B cell (primary cell): ENCODE measurements at regions of chr15 and their contacts with region 1.

Region 1: GRCh38 chr15:64162870-64163658 is at the start of gene PPIB:
- DNase-seq: peak; percentile 98
- ATAC-seq: peak; percentile 91
- H3K4me3 ChIP-seq: peak within 1 kb of the TSS; percentile 65 to 86 (median 85)
- H3K4me3 Mint-ChIP-seq: peak within 1 kb of the TSS; percentile 92
- H3K27ac ChIP-seq: peak within 1 kb of the TSS; percentile 72 to 87
- H3K27ac Mint-ChIP-seq: peak within 1 kb of the TSS; percentile 96
- H3K4me1 ChIP-seq: peaks cover 42 to 58% of the 10 kb centered on the region in 2 donors
- H3K4me1 Mint-ChIP-seq: peaks cover 52% of the 10 kb centered on the region
- H3K27me3 ChIP-seq: no peaks in the 10 kb centered on the region
- H3K27me3 Mint-ChIP-seq: no peaks in the 10 kb centered on the region
- CTCF ChIP-seq: peak; percentile 32
- total RNA-seq, gene PPIB: 107 and 108 TPM in 2 replicates

Region 2: DNA sequence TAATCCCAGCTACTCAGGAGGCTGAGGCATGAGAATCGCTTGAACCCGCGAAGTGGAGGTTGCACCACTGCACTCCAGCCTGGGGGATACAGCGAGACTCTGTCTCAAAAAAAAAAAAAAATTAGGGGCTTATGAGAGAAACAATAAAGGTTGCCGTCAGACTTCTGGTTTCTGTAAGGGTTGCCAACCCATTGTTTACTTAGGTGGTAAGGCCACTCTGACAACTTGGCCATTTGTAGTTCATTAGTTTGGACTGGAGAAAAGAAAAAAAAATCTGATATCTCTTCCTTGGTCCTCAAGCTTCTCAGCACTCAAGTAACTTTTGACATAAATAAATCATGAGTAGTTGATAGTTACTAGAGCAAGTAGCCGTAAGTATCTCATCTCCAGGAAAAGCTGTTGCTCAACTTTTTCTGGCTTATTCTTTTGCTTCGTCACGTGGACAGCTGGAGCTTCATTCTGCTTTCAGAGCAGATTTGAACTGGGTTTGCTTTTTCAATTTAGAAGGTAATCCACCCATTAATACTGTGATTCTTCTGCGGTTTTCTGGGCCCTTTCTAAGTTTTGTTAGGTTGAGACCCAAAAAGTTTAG is 57.9 kb before region 1 on chr15:
- CTCF ChIA-PET with region 1: no interaction called
- POLR2A ChIA-PET with region 1: no interaction called
- intact Hi-C with region 1: no loop called
- DNase-seq: no peak
- ATAC-seq: no peak
- H3K4me3 ChIP-seq: no peak overlapping the region
- H3K4me3 Mint-ChIP-seq: no peak overlapping the region
- H3K27ac ChIP-seq: no peak overlapping the region
- H3K27ac Mint-ChIP-seq: no peak overlapping the region
- H3K4me1 ChIP-seq: peaks cover 30 to 42% of the 10 kb centered on the region in 2 donors
- H3K4me1 Mint-ChIP-seq: peaks cover 54% of the 10 kb centered on the region
- H3K27me3 ChIP-seq: no peaks in the 10 kb centered on the region
- H3K27me3 Mint-ChIP-seq: no peaks in the 10 kb centered on the region
- CTCF ChIP-seq: no peak

Region 3: GRCh38 chr15:64144565-64145281 is 18.3 kb before region 1 on chr15:
- CTCF ChIA-PET with region 1: interaction called, 6 read pairs
- POLR2A ChIA-PET with region 1: interaction called, 11 read pairs
- intact Hi-C with region 1: no loop called
- DNase-seq: peak; percentile 48
- ATAC-seq: peak; percentile 78
- H3K4me3 ChIP-seq: no peak overlapping the region
- H3K4me3 Mint-ChIP-seq: peak overlapping the region; percentile 34
- H3K27ac ChIP-seq: peak overlapping the region; percentile 61 to 71
- H3K27ac Mint-ChIP-seq: peak overlapping the region; percentile 91
- H3K4me1 ChIP-seq: peaks cover 11 to 26% of the 10 kb centered on the region in 2 donors
- H3K4me1 Mint-ChIP-seq: peaks cover 27% of the 10 kb centered on the region
- H3K27me3 ChIP-seq: no peaks in the 10 kb centered on the region
- H3K27me3 Mint-ChIP-seq: no peaks in the 10 kb centered on the region
- CTCF ChIP-seq: no peak

Region 4: DNA sequence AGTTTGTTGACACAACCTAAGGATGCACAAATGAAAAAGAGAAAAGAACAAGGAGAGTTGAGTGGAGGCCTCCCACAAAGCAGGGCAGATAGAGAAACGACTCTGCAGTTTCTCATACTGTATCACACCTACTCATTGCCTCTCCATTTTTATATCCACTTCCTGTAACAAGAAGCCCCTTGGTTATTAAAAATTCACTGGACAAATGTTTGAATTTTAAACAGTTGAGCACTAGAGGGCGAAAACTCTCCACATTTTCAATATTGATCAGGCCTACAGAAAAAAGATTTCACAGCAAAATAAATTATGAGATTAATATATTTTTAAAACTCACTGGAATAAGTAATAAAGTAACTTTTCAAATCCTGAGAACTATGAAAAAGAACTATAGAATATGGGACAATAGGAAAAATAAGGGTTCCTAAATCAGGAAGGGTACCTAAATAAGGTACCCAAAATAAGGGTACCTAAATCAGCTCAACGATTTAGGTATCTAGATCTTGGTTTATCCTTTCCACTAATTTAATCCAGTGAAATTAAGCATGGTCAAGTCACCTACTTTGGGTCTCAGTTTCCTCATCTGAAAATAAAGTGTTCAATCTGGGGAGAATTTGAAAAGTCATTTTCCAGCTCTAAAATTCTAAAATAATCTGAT is 46.7 kb after region 1 on chr15:
- CTCF ChIA-PET with region 1: no interaction called
- POLR2A ChIA-PET with region 1: no interaction called
- intact Hi-C with region 1: loop called (anchors 1 kb)
- DNase-seq: peak; percentile 36
- ATAC-seq: no peak
- H3K4me3 ChIP-seq: no peak overlapping the region
- H3K4me3 Mint-ChIP-seq: no peak overlapping the region
- H3K27ac ChIP-seq: no peak overlapping the region
- H3K27ac Mint-ChIP-seq: no peak overlapping the region
- H3K4me1 ChIP-seq: no peaks in the 10 kb centered on the region
- H3K4me1 Mint-ChIP-seq: peaks cover 1% of the 10 kb centered on the region
- H3K27me3 ChIP-seq: no peaks in the 10 kb centered on the region
- H3K27me3 Mint-ChIP-seq: no peaks in the 10 kb centered on the region
- CTCF ChIP-seq: peak; percentile 60

Region 5: GRCh38 chr15:64387562-64388168 is 224.6 kb after region 1 on chr15 and contains the start of gene TRIP4:
- CTCF ChIA-PET with region 1: interaction called, 7 read pairs
- POLR2A ChIA-PET with region 1: interaction called, 5 read pairs
- intact Hi-C with region 1: loop called (anchors 1 kb)
- DNase-seq: peak; percentile 96
- ATAC-seq: peak; percentile 100
- H3K4me3 ChIP-seq: peak within 1 kb of the TSS; percentile 63 to 97 (median 82)
- H3K4me3 Mint-ChIP-seq: peak within 1 kb of the TSS; percentile 97
- H3K27ac ChIP-seq: peak within 1 kb of the TSS; percentile 58 to 70
- H3K27ac Mint-ChIP-seq: peak within 1 kb of the TSS; percentile 95
- H3K4me1 ChIP-seq: peaks cover 10 to 18% of the 10 kb centered on the region in 2 donors
- H3K4me1 Mint-ChIP-seq: peaks cover 15% of the 10 kb centered on the region
- H3K27me3 ChIP-seq: no peaks in the 10 kb centered on the region
- H3K27me3 Mint-ChIP-seq: no peaks in the 10 kb centered on the region
- CTCF ChIP-seq: no peak
- total RNA-seq, gene TRIP4: 35.7 and 38.2 TPM in 2 replicates

Region 6: GRCh38 chr15:65286704-65287519 is 1123.8 kb after region 1 on chr15 and contains the start of gene PARP16:
- CTCF ChIA-PET with region 1: no interaction called
- POLR2A ChIA-PET with region 1: interaction called, 3 read pairs
- intact Hi-C with region 1: loop called (anchors 5 kb)
- DNase-seq: peak; percentile 95
- ATAC-seq: peak; percentile 95
- H3K4me3 ChIP-seq: peak within 1 kb of the TSS; percentile 67 to 89 (median 84)
- H3K4me3 Mint-ChIP-seq: peak within 1 kb of the TSS; percentile 89
- H3K27ac ChIP-seq: peak within 1 kb of the TSS; percentile 83 to 91
- H3K27ac Mint-ChIP-seq: peak within 1 kb of the TSS; percentile 89
- H3K4me1 ChIP-seq: peaks cover 18 to 19% of the 10 kb centered on the region in 2 donors
- H3K4me1 Mint-ChIP-seq: peaks cover 37% of the 10 kb centered on the region
- H3K27me3 ChIP-seq: no peaks in the 10 kb centered on the region
- H3K27me3 Mint-ChIP-seq: no peaks in the 10 kb centered on the region
- CTCF ChIP-seq: no peak
- total RNA-seq, gene PARP16: 18.2 and 21.6 TPM in 2 replicates